ENCODE measurements at regions of chr4 and their contacts with region 1.

Region 1: GRCh38 chr4:173257732-173258717 is 76.1 kb downstream of the HMGB2 start:
- DNase-seq: no peak
- H3K4me3 ChIP-seq: no peak overlapping the region
- H3K27me3 ChIP-seq: peaks cover 3% of the 10 kb centered on the region
- CTCF ChIP-seq: peak; percentile 89

Region 2: GRCh38 chr4:172838108-172838507 is 419.9 kb before region 1 on chr4:
- CTCF ChIA-PET with region 1: no interaction called
- POLR2A ChIA-PET with region 1: no interaction called
- DNase-seq: no peak
- H3K4me3 ChIP-seq: no peak overlapping the region
- H3K27me3 ChIP-seq: no peaks in the 10 kb centered on the region
- CTCF ChIP-seq: no peak

Region 3: DNA sequence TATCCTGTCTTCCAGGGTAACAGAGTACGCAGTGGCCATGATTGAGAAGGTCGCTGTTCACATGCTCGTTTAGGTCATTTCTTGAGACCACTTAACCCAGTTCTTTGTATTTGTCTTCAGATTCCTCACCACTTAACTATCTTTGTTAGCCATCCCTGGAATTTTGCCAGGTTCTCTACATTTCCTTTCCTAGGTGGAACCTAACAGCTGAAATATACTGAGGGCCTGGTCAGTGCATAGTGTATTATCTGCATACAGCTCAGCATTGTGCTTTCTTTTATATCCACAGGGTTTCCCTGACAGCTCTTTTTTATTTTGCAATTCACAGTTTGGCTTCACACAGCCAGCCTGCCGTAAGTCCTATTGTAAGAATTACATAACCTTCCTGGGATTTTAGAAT is 238.3 kb before region 1 on chr4:
- CTCF ChIA-PET with region 1: interaction called, 92 read pairs
- POLR2A ChIA-PET with region 1: no interaction called
- DNase-seq: no peak
- H3K4me3 ChIP-seq: no peak overlapping the region
- H3K27me3 ChIP-seq: peaks cover 2% of the 10 kb centered on the region
- CTCF ChIP-seq: no peak

Region 4: DNA sequence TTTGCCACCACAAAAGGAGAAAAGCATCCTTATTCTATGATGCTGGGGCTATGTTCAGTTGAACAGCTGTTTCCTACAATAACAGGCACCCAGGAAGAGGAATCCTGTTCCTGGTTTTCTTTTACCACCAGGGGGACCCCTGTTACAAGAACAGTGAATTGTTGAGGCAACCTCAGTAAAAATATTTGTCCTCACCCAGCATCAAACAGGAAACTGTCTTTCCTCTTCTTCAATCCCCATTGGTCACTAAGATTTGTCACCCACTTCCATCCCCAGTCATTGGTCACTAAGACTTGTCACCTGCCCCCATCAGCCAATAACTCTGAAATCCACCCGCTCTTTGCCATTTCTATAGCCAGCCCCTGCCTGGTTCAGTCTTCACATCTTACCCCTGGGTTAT is 232.9 kb before region 1 on chr4:
- CTCF ChIA-PET with region 1: interaction called, 75 read pairs
- POLR2A ChIA-PET with region 1: no interaction called
- DNase-seq: no peak
- H3K4me3 ChIP-seq: no peak overlapping the region
- H3K27me3 ChIP-seq: no peaks in the 10 kb centered on the region; the same call in 1 of the 2 replicates
- CTCF ChIP-seq: peak; percentile 73

Region 5: DNA sequence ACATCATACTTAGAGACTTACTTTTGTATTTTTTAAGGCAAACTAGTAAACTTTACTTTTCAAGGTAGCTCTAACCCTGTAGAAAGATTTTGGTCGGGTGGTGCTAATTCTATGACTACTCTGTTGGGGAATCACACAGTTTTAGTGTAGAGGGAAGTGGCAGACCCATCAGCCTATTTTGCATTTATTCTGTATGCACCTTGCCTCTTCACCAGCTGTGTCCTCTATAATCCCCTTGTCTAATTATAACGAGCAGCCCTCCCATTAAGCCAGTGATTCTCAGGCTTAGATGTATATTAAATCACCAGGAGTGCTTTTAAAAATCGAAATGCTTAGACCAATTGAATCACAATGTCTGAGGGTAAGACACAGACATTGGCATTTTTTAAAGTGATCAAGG is 11.3 kb before region 1 on chr4:
- CTCF ChIA-PET with region 1: interaction called, 11 read pairs
- POLR2A ChIA-PET with region 1: no interaction called
- DNase-seq: no peak
- H3K4me3 ChIP-seq: no peak overlapping the region
- H3K27me3 ChIP-seq: peaks cover 6% of the 10 kb centered on the region
- CTCF ChIP-seq: no peak

Measured in BJ (cell line).